CD8-positive, alpha-beta memory T cell (primary cell): ENCODE measurements at regions of chr17 and their contacts with region 1.

Region 1: DNA sequence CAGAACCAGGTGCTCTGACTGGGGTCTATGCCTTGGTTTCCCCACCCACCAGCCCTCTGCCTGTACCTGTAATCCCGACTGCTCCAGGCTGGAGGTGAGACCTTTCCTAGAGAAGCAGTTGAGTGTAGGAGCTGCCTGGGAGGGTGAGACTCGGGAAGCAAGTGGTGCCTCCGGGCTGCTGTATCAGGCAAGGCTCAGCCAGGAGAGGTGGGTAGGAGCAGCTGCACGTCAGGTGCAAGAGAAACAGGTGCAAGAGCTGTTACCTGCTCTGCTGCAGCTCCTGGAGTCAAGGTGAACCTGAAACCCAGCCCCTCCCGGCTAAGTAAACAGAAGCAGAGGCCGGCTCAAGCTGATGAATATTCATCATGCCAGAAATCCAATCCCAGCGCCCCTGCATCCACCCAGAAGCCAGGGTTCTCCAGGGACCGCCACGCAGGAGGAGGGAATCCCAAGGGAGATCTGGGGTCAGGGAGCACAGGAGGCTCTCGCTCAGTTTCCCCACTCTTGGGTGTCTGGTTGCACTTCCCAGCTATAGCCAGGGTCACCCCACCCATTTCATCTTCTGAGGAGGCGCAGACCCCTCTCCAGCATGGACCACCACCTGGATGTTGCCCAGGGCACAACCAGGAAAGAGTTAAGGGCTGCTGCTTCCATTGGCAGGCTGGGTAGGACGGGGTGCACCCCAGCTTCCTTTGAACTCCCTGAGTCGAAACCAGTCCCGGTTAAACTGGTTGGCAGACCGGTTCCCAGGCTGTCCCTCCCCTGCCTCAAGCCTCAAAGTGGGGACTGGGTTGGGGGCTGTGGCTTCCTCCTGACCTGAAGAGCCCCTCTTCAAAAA is at the start of gene PRR15L:
- DNase-seq: peak in 1 of 5 donors; percentile 35
- H3K4me3 ChIP-seq: no peak within 1 kb of the TSS
- H3K4me3 Mint-ChIP-seq: no peak within 1 kb of the TSS
- H3K27ac ChIP-seq: no peak within 1 kb of the TSS
- H3K27ac Mint-ChIP-seq: peak within 1 kb of the TSS in 2 of 8 donors; percentile 36 to 50
- H3K4me1 ChIP-seq: no peaks in the 10 kb centered on the region
- H3K4me1 Mint-ChIP-seq: no peaks in the 10 kb centered on the region
- H3K27me3 ChIP-seq: no peaks in the 10 kb centered on the region
- H3K27me3 Mint-ChIP-seq: peaks cover 0 to 1% of the 10 kb centered on the region in 2 donors
- total RNA-seq, gene PRR15L: not detected

Region 2: DNA sequence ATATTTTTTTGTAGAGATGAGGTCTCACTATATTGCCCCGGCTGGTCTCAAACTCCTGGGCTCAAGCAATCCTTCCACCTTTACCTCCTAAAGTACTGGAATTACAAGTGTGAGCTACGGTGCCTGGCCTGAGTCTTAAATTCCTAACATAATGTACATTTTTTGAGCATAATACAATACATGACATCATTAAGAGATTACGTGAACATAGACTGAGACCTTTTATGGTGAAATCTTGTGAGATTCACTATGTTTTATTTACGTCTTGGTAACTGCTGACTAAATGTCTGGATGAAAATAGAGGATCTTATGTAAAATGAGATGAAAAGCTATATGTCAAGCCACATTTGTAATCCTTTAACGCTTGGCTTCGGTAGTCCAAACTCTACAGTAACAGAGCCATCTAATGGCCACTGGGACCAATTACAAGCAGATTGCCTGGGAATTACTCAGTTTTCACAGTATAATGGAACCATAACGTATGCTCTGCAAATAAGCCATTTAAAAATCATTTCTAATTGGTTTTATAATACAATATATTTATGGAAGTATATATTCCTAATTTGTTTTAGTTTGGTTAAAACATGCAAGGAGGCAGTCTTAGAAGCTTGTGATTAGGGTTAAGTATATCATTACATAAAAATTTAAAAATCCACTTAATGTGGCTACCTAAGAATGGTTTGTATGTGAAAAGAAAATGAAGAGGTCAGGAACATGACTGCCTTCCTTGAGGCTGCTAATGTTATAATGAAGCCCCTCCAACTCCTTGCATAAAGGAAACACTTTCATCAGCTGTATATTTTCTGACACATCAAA is 642.2 kb before region 1 on chr17:
- CTCF ChIA-PET with region 1: no interaction called
- POLR2A ChIA-PET with region 1: no interaction called
- DNase-seq: peak in 3 of 5 donors; percentile 37 to 52 (median 49)
- H3K4me3 ChIP-seq: no peak overlapping the region
- H3K4me3 Mint-ChIP-seq: no peak overlapping the region
- H3K27ac ChIP-seq: no peak overlapping the region
- H3K27ac Mint-ChIP-seq: no peak overlapping the region
- H3K4me1 ChIP-seq: no peaks in the 10 kb centered on the region
- H3K4me1 Mint-ChIP-seq: no peaks in the 10 kb centered on the region
- H3K27me3 ChIP-seq: no peaks in the 10 kb centered on the region
- H3K27me3 Mint-ChIP-seq: peaks cover 5 to 6% of the 10 kb centered on the region in 2 donors

Region 3: DNA sequence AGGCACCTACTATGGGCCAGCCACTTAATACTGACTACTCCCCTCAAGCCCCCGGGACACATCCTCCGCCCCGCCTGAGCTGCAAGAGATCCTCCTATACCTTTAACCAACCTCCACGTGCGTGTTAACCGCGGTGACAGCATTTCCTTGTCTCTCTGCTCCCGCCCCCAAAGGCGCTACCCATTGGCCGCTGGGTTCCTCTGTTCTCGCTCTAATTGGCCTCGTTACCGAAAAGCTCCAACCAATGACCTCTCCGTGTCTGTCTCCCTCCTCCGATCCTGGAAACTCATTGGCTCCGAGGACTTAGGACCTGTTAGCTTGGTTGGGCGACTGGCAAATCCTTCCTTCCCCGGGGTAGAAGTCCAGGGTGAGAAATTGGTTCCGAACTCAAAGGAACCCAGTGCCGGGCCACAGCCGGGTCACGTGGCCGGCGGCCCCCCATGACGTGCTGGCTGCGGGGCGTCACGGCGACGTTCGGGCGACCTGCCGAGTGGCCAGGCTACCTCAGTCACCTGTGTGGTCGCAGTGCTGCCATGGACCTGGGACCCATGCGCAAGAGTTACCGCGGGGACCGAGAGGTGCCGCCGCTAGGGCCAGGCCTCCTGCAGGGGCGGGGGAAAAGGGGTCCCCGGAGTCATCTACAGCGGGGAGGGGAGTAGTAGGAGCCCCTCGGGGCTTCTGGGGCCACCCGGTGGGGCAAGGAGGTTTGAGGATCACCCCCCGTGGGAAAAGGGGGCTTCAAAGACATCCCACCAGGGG is 16.4 kb before region 1 on chr17 and contains the start of gene PNPO:
- CTCF ChIA-PET with region 1: interaction called, 24 read pairs
- POLR2A ChIA-PET with region 1: interaction called, 3 read pairs
- DNase-seq: peak; percentile 88 to 96 (median 93)
- H3K4me3 ChIP-seq: peak within 1 kb of the TSS; percentile 88
- H3K4me3 Mint-ChIP-seq: peak within 1 kb of the TSS; percentile 59 to 91 (median 86)
- H3K27ac ChIP-seq: peak within 1 kb of the TSS; percentile 81
- H3K27ac Mint-ChIP-seq: peak within 1 kb of the TSS; percentile 53 to 96 (median 92)
- H3K4me1 ChIP-seq: peaks cover 43% of the 10 kb centered on the region
- H3K4me1 Mint-ChIP-seq: peaks cover 33 to 57% (median 49%) of the 10 kb centered on the region in 3 donors
- H3K27me3 ChIP-seq: no peaks in the 10 kb centered on the region
- H3K27me3 Mint-ChIP-seq: no peaks in the 10 kb centered on the region
- total RNA-seq, gene PNPO: 55.5 to 57.7 TPM